Endothelial cell of umbilical vein (primary cell): ENCODE measurements at regions of chr13 and their contacts with region 1.

Region 1: DNA sequence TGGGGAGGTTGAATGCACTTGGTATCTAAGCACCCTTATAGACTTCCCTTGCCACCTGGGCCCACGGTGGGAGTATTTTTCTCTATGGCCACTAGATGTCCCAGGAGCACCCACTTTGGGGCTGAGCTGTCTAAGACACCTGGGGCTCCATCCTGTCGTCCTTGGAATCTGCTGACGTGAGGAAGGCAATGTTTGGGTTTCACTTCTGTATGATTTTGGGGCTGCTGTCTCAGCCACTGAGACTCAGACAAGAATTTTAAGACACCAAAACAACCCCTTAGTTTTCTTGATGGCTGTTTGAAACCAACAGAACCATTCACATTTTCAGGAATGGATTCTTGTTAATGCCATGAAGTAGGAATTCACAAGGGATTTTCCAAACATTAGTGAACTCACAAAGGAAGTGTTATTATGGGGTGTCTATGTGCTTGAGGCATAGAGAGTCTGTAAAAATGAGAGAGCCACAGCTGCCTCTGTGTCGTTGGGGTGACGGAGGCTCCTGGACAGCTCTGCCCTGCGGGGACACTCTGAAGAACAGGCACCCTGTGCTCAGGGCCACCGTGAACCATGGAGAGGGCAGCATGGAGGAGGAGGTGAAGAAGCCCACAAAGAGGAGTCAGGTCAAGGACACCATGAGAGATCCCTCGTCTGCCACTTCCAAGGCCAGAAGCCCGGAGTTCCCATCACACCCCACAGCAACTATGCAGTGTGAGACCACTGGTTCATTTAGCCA is 106.8 kb upstream of the SPATA13 start:
- DNase-seq: peak; percentile 72
- H3K4me3 ChIP-seq: no peak overlapping the region
- H3K27ac ChIP-seq: no peak overlapping the region
- H3K4me1 ChIP-seq: peaks cover 16% of the 10 kb centered on the region
- H3K27me3 ChIP-seq: no peaks in the 10 kb centered on the region
- CTCF ChIP-seq: peak; percentile 56 to 68
- POLR2A ChIP-seq: no peak

Region 2: GRCh38 chr13:23921451-23921888 is 132.2 kb before region 1 on chr13:
- CTCF ChIA-PET with region 1: interaction called, 4 read pairs
- POLR2A ChIA-PET with region 1: no interaction called
- dilution Hi-C with region 1: no loop called
- intact Hi-C with region 1: loop called (anchors 2 kb)
- DNase-seq: peak; percentile 65
- H3K4me3 ChIP-seq: no peak overlapping the region
- H3K27ac ChIP-seq: peak overlapping the region; percentile 62
- H3K4me1 ChIP-seq: peaks cover 16% of the 10 kb centered on the region
- H3K27me3 ChIP-seq: peaks cover 10 to 12% of the 10 kb centered on the region in 2 experiments
- CTCF ChIP-seq: peak; percentile 58 to 59
- POLR2A ChIP-seq: no peak

Region 3: GRCh38 chr13:24074701-24075100 is 21.0 kb after region 1 on chr13:
- CTCF ChIA-PET with region 1: interaction called, 12 read pairs
- POLR2A ChIA-PET with region 1: no interaction called
- dilution Hi-C with region 1: no loop called
- intact Hi-C with region 1: no loop called
- DNase-seq: peak; percentile 84
- H3K4me3 ChIP-seq: no peak overlapping the region
- H3K27ac ChIP-seq: peak overlapping the region; percentile 96
- H3K4me1 ChIP-seq: peaks cover 39% of the 10 kb centered on the region
- H3K27me3 ChIP-seq: no peaks in the 10 kb centered on the region
- CTCF ChIP-seq: no peak
- POLR2A ChIP-seq: peak; percentile 29

Region 4: DNA sequence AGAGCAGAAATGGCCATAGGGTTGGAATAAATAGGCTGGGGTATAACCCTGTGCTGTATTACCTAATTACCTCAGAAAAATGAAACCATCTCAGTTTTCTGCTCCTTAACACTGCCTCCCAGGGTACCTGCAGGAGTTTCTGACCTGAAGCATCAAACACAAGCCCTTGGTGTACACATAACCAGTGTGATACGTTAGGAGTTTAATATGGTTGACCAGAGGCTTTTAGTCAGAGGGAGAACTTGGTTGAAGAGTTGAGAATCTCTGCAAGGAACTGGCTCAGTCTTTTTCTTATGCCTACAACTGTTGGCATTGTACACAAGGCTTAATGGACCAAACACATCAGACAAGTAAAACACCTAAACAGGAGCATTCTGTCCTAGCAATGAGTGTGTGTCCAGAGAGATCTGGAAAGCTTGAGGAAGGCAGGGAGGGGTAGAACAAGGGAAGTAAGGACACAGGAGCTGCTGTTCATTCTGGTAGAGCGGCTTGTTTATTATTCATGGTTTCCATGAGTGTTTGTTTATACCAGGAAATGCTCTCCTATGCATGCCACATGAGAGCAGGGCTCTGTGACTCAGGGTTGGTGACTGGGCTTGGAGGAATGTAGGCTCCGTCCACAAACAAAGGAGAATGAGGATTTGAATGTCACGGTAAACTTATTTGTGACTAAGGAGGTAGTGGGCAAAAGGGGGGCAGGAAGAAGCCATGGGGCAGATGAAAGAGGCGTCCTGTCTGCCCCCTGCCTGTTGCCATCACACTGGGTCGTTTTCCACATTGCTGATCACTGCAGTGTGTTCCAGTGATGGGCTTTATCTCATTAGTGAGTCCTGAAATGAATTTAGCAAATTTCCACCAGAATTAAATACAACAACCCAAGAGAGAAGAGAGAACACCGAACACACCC is 95.0 kb after region 1 on chr13:
- CTCF ChIA-PET with region 1: interaction called, 5 read pairs
- POLR2A ChIA-PET with region 1: no interaction called
- dilution Hi-C with region 1: no loop called
- intact Hi-C with region 1: loop called (anchors 1 kb)
- DNase-seq: peak; percentile 94
- H3K4me3 ChIP-seq: no peak overlapping the region
- H3K27ac ChIP-seq: peak overlapping the region; percentile 91
- H3K4me1 ChIP-seq: peaks cover 19% of the 10 kb centered on the region
- H3K27me3 ChIP-seq: no peaks in the 10 kb centered on the region
- CTCF ChIP-seq: no peak
- POLR2A ChIP-seq: no peak

Region 5: DNA sequence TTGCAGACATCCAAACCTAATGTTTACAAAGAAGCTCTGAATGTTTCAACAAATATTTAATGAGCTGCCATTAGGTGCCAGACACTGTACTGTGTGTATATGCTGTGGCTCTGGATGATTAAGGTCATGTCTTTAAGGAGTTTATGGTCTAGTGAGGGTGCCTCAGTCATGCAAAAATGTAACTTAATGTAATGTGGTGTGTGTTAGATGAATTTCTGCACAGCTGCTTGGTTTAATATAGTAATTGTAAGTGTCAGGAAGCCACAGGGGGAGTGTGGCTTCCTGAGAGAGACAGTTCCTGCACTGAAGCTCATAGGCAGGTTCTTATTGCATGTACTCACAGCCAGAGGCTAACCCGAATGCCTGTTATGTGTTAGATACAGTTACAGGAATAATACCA is 150.1 kb after region 1 on chr13:
- CTCF ChIA-PET with region 1: interaction called, 12 read pairs
- POLR2A ChIA-PET with region 1: no interaction called
- dilution Hi-C with region 1: no loop called
- intact Hi-C with region 1: no loop called
- DNase-seq: peak; percentile 42
- H3K4me3 ChIP-seq: no peak overlapping the region
- H3K27ac ChIP-seq: no peak overlapping the region
- H3K4me1 ChIP-seq: peaks cover 15% of the 10 kb centered on the region
- H3K27me3 ChIP-seq: no peaks in the 10 kb centered on the region
- CTCF ChIP-seq: no peak
- POLR2A ChIP-seq: no peak

Region 6: DNA sequence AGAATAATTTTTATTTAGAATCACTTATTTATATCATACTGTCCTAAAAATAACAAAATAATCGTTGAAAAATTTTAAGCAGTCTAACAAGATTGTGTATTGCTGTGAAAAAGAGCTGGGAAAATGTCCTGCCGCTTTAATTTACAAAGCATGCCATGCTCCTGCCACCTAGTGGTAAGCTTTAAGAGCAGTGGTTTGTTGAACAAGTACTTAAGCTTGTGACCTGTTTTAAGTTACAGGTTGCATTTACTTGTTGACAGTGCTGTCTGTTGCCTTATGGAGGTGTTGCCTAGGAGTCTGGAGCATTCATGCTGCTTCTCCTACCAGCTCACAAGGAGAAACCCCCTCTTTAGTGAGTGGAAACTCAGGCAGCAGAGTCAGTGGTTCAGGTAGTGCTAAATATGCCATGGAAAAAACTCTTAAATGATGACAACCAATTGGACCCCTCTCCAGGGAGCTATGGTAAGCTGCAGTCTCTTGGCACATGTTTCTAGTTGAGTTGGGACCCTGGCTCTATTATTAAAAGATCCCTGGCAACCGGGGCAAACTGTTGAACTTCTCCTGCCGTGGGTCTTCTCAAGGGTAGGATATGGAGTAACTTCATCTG is 175.3 kb after region 1 on chr13:
- CTCF ChIA-PET with region 1: interaction called, 47 read pairs
- POLR2A ChIA-PET with region 1: no interaction called
- dilution Hi-C with region 1: no loop called
- intact Hi-C with region 1: loop called (anchors 2 kb)
- DNase-seq: peak; percentile 67
- H3K4me3 ChIP-seq: no peak overlapping the region
- H3K27ac ChIP-seq: no peak overlapping the region
- H3K4me1 ChIP-seq: peaks cover 5% of the 10 kb centered on the region
- H3K27me3 ChIP-seq: no peaks in the 10 kb centered on the region
- CTCF ChIP-seq: peak; percentile 78 to 82
- POLR2A ChIP-seq: no peak